ENCODE measurements at regions of chr1 and their contacts with region 1.

Region 1: DNA sequence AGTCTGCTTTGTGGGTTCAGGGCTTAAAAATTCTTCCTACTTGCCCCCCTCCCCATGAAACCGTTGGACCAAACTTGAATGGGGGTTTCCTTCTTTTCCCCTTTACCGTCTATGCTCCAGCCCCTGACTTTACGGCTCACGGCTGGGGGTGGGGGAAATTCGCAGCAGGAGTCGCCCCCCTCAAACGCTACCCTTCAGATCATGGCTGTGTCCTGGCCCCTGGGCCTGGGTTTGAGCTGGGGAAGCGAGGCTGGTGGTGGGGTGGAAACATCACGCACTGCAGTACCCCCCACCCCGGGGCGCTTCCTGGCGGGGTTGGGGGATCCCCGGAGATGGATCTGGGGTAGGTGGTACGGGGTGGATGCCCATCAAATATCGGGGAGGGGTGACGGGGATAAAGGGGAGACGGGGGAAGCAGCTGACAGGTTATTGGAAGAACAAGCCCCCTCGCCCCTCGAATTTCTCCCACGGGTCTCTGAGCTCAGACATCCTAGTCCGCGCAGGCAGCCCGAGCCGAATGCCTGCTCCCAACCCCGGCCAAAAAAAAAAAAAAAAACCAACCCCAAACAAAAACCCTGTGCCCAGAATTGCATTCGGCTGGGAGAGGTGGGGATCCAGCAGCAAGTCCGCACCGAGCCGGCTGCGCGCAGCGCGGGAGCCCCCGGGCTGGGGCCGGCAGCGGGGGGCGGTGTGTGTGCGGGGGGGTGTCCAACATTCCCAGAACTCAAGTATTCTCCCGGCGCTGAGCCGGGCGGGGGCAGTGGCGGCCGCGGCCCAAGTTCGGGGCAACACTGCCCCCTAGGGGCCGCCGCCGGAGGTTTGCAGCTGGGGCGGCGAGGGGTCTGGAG is 59.0 kb upstream of the ACOT11 start:
- DNase-seq: peak; percentile 93

Region 2: GRCh38 chr1:53851571-53852285 is 637.3 kb before region 1 on chr1:
- intact Hi-C with region 1: loop called in 1 of 2 experiments (anchors 10 kb)
- DNase-seq: no peak

Region 3: GRCh38 chr1:54081306-54082270 is 407.4 kb before region 1 on chr1:
- intact Hi-C with region 1: loop called (anchors 5 to 10 kb)
- DNase-seq: peak; percentile 84

Region 4: DNA sequence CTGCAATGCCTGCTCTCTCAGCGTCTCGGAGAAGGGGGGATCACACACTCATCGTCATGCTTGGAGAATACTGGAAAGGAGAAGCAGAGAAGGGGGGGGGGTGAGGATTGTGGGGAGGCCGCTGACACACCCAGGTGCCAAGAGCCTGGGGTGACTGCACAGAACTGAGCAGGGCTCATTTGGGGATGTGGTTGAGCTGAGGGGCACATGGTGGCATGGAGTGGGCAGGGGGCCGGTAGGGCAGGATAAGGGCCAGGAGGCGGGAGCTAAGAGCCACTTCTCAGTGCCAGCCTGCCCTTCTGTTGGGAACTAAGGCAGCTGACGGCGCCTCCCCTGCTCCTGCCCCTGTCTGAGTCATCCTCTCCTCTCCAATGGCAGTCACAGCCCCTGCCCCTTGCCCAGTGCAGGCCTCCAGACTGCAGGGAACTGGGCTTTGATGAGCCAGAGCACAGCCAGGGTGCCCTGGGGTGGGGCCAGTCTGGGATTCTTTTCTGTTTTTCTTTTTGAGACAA is 261.9 kb before region 1 on chr1:
- intact Hi-C with region 1: no loop called
- DNase-seq: peak; percentile 81

Region 5: DNA sequence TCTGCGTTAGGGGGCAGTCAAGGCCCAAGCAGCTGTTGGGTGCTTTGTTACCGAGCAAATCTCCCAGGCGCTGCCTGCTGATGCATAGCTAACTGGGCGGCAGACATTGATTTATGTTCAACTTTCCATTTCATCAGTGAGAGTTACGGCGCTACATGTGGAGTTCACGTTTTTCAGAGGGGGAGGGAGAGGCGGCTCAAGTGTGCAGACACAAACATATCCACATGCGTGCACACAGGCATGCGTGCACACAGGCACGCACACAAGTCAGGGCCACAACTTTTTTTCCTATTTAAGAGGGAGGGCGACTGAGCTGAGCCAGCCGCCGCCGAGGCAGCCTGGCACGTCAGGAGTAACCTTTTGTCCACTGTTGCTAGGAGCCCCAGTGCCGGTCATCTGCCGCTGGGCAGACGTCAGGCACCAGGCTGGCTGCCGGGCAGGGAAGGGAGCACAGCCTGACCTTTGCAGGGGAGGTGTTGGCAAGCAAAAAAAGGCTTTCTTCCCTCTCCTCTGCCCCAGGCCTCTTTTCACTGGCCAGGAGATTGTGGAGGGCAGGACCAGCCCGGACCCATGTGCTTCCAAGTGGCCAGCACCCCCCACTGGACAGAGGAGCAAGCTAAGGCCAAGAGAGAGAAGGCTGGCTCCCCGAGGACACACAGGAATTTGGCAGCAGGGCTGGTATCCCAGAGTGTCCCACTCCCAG is 215.8 kb before region 1 on chr1:
- intact Hi-C with region 1: loop called in 1 of 2 experiments (anchors 2 kb)
- DNase-seq: peak; percentile 93

Region 6: DNA sequence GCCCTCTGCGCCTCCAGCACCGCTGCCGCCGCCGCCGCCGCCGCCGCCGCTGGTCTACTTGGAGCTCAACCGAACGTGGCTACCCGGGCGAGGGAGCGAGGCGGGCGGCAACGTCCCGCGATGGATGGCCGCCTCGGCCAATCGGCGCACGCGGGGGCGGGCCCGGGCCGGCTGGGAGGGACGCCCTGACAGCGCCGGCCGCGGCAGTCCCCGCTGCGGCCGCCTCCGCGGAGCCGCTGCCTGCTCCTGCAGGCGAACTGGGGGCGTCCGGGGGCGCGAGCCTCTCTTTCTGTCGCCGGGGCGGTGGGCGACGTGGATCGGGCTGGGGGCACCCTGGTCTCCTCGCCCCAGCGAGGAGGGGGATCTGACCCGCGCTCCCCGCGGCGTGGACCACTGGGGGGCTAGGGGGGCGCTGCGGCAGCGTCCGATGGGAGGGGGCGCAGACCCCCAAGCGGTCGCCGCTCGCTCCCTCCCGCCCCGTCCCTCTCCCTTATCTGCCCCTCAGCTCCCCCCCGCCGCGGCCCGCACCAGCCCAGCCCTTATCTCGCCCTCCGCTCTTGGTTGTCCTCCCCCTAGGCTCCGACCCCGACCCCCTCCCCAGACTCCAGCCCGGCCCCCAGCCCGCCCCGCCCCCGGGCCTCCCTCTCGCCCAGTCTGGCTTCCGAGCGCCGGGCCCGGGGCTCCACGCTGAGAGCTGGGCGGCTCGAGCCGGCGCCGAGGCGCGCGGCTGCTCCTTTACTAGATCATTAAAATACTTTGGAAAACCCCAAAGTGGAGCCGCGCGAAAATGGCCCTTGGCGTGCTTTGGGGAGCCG is 82.5 kb before region 1 on chr1 and contains the start of gene SSBP3:
- intact Hi-C with region 1: loop called (anchors 2 kb)
- DNase-seq: peak; percentile 97
- total RNA-seq, gene SSBP3: 41.8 to 56.1 TPM

Measured in posterior vena cava (tissue), 2 donors.